Heart left ventricle (tissue), 16 donors: ENCODE measurements at regions of chr7 and their contacts with region 1.

Region 1: DNA sequence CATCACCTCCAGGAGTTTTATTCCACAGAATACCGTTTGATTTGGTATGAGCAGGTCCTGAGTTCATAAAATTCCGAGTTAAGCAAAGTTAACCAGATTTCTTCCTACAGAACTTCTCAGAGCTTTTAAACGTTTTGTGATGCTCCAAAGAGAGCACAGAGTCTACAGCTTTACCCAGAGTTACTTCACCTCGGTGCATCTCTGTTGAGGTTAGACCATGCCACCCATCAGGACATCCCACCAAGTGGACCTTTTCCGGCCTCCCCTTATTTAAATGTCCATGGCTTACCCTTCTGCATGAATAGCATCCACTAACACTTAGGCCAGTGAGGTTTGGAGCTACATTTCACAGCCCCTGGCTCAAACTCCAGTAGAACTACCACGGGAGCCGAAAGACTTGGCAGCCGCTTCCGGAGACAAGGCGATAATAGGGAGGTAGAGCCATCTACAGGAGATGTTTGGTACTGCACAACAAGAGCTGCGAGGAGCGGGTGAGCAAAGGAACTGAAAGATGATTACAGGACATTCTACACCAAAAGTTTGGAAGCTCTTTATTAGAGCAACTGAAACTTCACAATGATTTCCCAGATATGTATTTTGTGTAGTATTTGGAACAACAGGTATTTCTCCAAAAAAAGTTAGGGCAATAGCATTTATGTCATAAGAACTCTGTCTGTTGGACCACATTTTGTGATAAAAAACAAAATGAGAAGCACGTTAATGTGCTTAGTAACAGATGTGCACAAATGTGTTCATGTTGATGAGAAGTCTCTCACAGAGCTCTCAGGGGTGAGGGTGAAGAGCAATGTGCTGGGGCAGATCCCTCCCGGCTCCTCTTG is 174.7 kb downstream of the HERPUD2 start:
- DNase-seq: peak; percentile 76 to 89 (median 80)
- ATAC-seq: peak; percentile 83 to 92 (median 88)
- H3K4me3 ChIP-seq: no peak overlapping the region
- H3K27ac ChIP-seq: peak overlapping the region in 6 of 12 donors; percentile 3 to 47 (median 20)
- H3K4me1 ChIP-seq: peaks cover 0 to 38% (median 11%) of the 10 kb centered on the region in 12 donors
- H3K27me3 ChIP-seq: no peaks in the 10 kb centered on the region
- CTCF ChIP-seq: peak; percentile 74 to 93 (median 86)
- POLR2A ChIP-seq: no peak

Region 2: DNA sequence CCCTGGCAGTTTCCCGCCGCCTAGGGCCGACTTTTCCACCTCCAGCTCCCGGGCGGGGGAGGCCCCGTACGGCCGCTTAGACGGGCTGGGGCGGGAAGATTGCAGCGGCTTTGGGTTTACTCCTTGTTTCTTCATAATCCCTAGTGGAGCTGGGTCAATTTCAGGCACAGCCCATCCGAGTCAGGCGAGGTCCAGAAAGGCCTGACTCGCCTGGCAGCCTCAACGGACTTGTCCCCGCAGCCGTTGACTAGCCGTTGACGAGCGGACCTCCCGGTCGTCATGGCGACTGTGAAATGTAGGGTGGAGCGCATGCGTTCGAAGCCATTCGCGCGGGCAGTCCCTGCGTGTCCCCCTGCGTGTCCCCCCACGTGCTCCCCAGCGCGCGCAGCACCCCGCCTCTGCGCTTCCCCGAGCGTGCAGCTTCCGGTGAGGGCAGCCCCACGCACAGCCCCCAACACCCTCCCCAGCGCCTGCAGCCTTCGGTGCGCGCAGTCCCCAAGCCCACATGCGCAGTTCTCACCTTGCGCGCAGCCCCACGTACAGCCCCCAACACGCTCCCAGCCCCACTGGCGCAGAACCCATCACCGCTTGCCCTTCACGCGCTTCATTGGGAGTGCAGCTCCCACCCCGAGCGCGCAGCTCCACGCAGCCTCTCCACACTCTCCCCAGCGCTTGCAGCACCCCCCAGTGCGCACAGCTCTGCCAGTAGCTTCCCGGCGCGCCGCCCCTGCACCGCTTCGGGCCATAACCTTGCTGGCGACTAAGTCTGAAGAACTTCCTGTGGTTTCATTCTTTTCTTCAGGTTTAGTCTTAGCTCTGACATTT is 334.1 kb before region 1 on chr7:
- intact Hi-C with region 1: loop called in 5 of 10 experiments (anchors 5 to 10 kb)
- DNase-seq: peak; percentile 65 to 83 (median 72)
- ATAC-seq: peak; percentile 77 to 93 (median 89)
- H3K4me3 ChIP-seq: peak overlapping the region; percentile 32 to 74 (median 56)
- H3K27ac ChIP-seq: peak overlapping the region; percentile 46 to 95 (median 82)
- H3K4me1 ChIP-seq: peaks cover 0 to 4% (median 0%) of the 10 kb centered on the region in 12 donors
- H3K27me3 ChIP-seq: peaks cover 0 to 16% (median 0%) of the 10 kb centered on the region in 9 donors
- CTCF ChIP-seq: peak in 2 of 12 donors; percentile 26 to 32
- POLR2A ChIP-seq: no peak

Region 3: DNA sequence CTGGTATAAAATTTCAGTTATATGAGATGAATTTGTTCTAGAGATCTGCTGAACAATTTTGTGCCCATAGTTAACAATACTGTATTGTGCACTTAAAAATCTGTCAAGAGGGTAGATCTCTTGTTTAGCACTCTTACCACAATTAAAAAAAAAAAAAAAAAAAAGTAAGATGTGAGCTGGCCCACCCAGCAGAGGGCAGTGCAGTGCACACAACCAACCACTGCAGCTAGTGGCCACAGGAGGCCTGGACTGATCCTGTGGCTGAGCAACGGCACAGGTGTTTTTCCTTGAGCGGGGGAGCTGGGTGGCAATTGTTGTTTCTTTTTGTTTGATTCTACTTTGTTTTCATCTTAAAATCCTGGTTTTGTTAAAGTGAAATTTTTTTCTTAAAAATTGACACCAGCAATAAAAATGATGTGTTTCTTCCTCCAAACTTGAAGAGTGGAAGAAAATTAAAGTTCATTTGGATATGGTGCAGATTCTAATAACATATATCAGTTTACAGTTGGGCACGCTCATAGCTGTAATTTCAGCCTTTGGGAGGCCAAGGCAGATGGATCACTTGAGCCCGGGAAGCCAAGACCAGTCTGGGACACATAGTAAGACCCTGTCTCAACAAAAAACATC is 95.2 kb before region 1 on chr7:
- intact Hi-C with region 1: loop called (anchors 1 to 5 kb)
- DNase-seq: peak; percentile 55 to 79 (median 65)
- ATAC-seq: peak; percentile 55 to 77 (median 72)
- H3K4me3 ChIP-seq: no peak overlapping the region
- H3K27ac ChIP-seq: no peak overlapping the region
- H3K4me1 ChIP-seq: peaks cover 0 to 13% (median 2%) of the 10 kb centered on the region in 12 donors
- H3K27me3 ChIP-seq: peaks cover 0 to 3% (median 0%) of the 10 kb centered on the region in 9 donors
- CTCF ChIP-seq: peak; percentile 64 to 79 (median 70)
- POLR2A ChIP-seq: no peak

Region 4: GRCh38 chr7:35465791-35466336 is 54.3 kb before region 1 on chr7:
- intact Hi-C with region 1: loop called in 1 of 10 experiments (anchors 5 kb)
- DNase-seq: peak; percentile 77 to 92 (median 84)
- ATAC-seq: peak; percentile 87 to 95 (median 91)
- H3K4me3 ChIP-seq: no peak overlapping the region
- H3K27ac ChIP-seq: peak overlapping the region in 11 of 12 donors; percentile 57 to 91 (median 76)
- H3K4me1 ChIP-seq: peaks cover 0 to 14% (median 0%) of the 10 kb centered on the region in 12 donors
- H3K27me3 ChIP-seq: no peaks in the 10 kb centered on the region
- CTCF ChIP-seq: no peak
- POLR2A ChIP-seq: no peak

Region 5: GRCh38 chr7:35681231-35682029 is 161.2 kb after region 1 on chr7:
- intact Hi-C with region 1: no loop called
- DNase-seq: no peak
- ATAC-seq: no peak
- H3K4me3 ChIP-seq: no peak overlapping the region
- H3K27ac ChIP-seq: no peak overlapping the region
- H3K4me1 ChIP-seq: peaks cover 0 to 47% (median 23%) of the 10 kb centered on the region in 12 donors
- H3K27me3 ChIP-seq: no peaks in the 10 kb centered on the region
- CTCF ChIP-seq: no peak
- POLR2A ChIP-seq: no peak